Ascending aorta (tissue), 2 donors: ENCODE measurements at regions of chr11 and their contacts with region 1.

Region 1: GRCh38 chr11:129895126-129896041 is at the start of gene NFRKB:
- DNase-seq: peak in 1 of 2 donors; percentile 93
- H3K4me3 ChIP-seq: peak within 1 kb of the TSS; percentile 94 to 96
- H3K27ac ChIP-seq: peak within 1 kb of the TSS; percentile 60 to 78
- H3K4me1 ChIP-seq: peaks cover 0 to 9% of the 10 kb centered on the region in 2 donors
- H3K27me3 ChIP-seq: no peaks in the 10 kb centered on the region
- CTCF ChIP-seq: no peak
- total RNA-seq, gene NFRKB: 6.9 TPM

Region 2: GRCh38 chr11:130916238-130916855 is 1021.0 kb after region 1 on chr11 and contains the start of gene SNX19:
- intact Hi-C with region 1: loop called (anchors 10 kb)
- DNase-seq: peak; percentile 52 to 94
- H3K4me3 ChIP-seq: peak within 1 kb of the TSS; percentile 72 to 99
- H3K27ac ChIP-seq: peak within 1 kb of the TSS; percentile 86 to 97
- H3K4me1 ChIP-seq: peaks cover 6 to 11% of the 10 kb centered on the region in 2 donors
- H3K27me3 ChIP-seq: no peaks in the 10 kb centered on the region
- CTCF ChIP-seq: peak; percentile 88 to 96 (median 93)
- total RNA-seq, gene SNX19: 137 TPM